ENCODE measurements at regions of chr1 and their contacts with region 1.

Region 1: DNA sequence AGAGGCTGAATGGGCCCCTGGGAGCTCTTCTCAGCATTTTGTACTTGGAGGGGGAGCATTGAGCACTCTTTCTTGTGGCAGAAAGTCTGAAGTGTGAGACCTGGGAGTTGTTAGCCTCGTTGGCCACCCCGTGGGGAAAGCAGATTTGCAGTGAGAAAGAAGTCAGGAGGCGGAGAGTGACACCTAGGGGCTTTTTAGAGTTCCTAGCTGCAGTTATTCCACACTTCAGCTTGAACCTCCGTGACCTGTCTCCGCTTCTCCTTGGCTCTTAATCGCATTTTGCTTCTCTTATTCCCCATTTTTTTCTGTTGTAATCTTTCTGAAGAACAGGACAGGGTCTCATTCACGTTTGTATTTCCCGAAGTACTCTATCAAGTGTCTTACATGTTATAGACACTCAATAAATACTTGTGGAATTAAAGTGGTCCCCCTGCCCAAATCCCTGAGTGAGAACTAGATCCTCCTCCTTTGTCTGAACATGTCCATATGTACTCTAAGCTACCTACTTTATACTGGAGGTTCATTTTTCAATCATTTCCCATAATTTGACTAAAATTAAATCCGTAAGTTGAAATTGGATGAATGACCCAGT is 14.5 kb upstream of the C1orf141 start:
- DNase-seq: peak; percentile 79
- ATAC-seq: peak; percentile 91
- H3K4me3 Mint-ChIP-seq: no peak overlapping the region
- H3K27ac Mint-ChIP-seq: peak overlapping the region; percentile 44
- H3K4me1 Mint-ChIP-seq: peaks cover 36% of the 10 kb centered on the region
- H3K27me3 Mint-ChIP-seq: peaks cover 21% of the 10 kb centered on the region
- CTCF ChIP-seq: peak; percentile 67

Region 2: GRCh38 chr1:66951513-66951912 is 197.8 kb before region 1 on chr1:
- CTCF ChIA-PET with region 1: no interaction called
- POLR2A ChIA-PET with region 1: no interaction called
- intact Hi-C with region 1: no loop called
- DNase-seq: no peak
- ATAC-seq: no peak
- H3K4me3 Mint-ChIP-seq: no peak overlapping the region
- H3K27ac Mint-ChIP-seq: no peak overlapping the region
- H3K4me1 Mint-ChIP-seq: peaks cover 41% of the 10 kb centered on the region
- H3K27me3 Mint-ChIP-seq: no peaks in the 10 kb centered on the region
- CTCF ChIP-seq: no peak

Region 3: GRCh38 chr1:66985835-66986234 is 163.4 kb before region 1 on chr1:
- CTCF ChIA-PET with region 1: interaction called, 11 read pairs
- POLR2A ChIA-PET with region 1: interaction called, 3 read pairs
- intact Hi-C with region 1: no loop called
- DNase-seq: no peak
- ATAC-seq: no peak
- H3K4me3 Mint-ChIP-seq: no peak overlapping the region
- H3K27ac Mint-ChIP-seq: no peak overlapping the region
- H3K4me1 Mint-ChIP-seq: peaks cover 45% of the 10 kb centered on the region
- H3K27me3 Mint-ChIP-seq: no peaks in the 10 kb centered on the region
- CTCF ChIP-seq: no peak

Region 4: DNA sequence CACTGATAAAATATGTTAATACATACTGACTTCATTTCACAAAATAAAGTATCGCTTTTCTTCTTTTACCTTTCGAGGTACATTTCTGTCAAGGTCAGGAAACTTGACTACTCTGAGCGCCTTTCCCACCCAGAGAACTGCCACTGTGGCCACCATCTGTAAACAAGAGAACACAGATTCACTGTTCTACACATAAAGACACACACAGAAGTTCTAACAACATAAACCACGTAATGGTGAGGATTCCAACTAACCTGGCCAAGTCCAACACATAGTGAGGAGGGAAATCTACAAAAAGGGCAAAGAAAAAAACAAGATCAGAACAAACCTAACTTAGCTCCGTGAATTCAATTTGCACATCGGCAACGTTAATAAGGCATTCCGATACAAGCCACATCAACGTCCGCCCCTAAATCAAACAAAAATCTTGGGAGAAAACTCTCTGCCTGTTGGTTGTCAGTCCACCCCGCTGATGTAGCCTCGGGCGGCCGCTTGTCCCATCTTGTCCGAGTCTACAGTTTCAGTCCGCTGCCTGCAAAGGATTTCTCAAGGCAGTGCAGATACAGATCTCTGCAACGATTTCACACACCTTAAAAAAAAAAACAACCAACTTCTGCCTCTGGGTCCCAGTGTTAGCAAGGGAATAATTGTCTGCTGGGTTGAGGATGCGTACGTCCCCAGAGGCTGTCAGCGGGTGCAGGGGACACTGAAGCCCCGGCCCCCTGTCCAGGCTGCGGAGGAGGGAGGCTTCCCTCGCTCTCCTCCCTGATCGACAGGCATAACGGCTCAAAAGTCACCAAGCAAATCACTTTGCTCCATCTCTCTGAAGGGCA is 96.4 kb before region 1 on chr1:
- CTCF ChIA-PET with region 1: interaction called, 10 read pairs
- POLR2A ChIA-PET with region 1: interaction called, 3 read pairs
- intact Hi-C with region 1: no loop called
- DNase-seq: peak; percentile 51
- ATAC-seq: no peak
- H3K4me3 Mint-ChIP-seq: peak overlapping the region; percentile 84
- H3K27ac Mint-ChIP-seq: peak overlapping the region; percentile 82
- H3K4me1 Mint-ChIP-seq: peaks cover 22% of the 10 kb centered on the region
- H3K27me3 Mint-ChIP-seq: no peaks in the 10 kb centered on the region
- CTCF ChIP-seq: no peak

Region 5: GRCh38 chr1:67162957-67163356 is 13.7 kb after region 1 on chr1:
- CTCF ChIA-PET with region 1: interaction called, 19 read pairs
- POLR2A ChIA-PET with region 1: interaction called, 3 read pairs
- intact Hi-C with region 1: no loop called
- DNase-seq: peak; percentile 79
- ATAC-seq: peak; percentile 76
- H3K4me3 Mint-ChIP-seq: no peak overlapping the region
- H3K27ac Mint-ChIP-seq: peak overlapping the region; percentile 83
- H3K4me1 Mint-ChIP-seq: peaks cover 39% of the 10 kb centered on the region
- H3K27me3 Mint-ChIP-seq: peaks cover 4% of the 10 kb centered on the region
- CTCF ChIP-seq: no peak

Region 6: GRCh38 chr1:67227196-67227595 is 77.9 kb after region 1 on chr1:
- CTCF ChIA-PET with region 1: no interaction called
- POLR2A ChIA-PET with region 1: no interaction called
- intact Hi-C with region 1: no loop called
- DNase-seq: no peak
- ATAC-seq: no peak
- H3K4me3 Mint-ChIP-seq: no peak overlapping the region
- H3K27ac Mint-ChIP-seq: no peak overlapping the region
- H3K4me1 Mint-ChIP-seq: peaks cover 5% of the 10 kb centered on the region
- H3K27me3 Mint-ChIP-seq: peaks cover 5% of the 10 kb centered on the region
- CTCF ChIP-seq: no peak